ENCODE measurements at regions of chr7 and their contacts with region 1.

Region 1: GRCh38 chr7:26187380-26188205 is 13.0 kb downstream of the HNRNPA2B1 start:
- DNase-seq: no peak
- CTCF ChIP-seq: no peak

Region 2: DNA sequence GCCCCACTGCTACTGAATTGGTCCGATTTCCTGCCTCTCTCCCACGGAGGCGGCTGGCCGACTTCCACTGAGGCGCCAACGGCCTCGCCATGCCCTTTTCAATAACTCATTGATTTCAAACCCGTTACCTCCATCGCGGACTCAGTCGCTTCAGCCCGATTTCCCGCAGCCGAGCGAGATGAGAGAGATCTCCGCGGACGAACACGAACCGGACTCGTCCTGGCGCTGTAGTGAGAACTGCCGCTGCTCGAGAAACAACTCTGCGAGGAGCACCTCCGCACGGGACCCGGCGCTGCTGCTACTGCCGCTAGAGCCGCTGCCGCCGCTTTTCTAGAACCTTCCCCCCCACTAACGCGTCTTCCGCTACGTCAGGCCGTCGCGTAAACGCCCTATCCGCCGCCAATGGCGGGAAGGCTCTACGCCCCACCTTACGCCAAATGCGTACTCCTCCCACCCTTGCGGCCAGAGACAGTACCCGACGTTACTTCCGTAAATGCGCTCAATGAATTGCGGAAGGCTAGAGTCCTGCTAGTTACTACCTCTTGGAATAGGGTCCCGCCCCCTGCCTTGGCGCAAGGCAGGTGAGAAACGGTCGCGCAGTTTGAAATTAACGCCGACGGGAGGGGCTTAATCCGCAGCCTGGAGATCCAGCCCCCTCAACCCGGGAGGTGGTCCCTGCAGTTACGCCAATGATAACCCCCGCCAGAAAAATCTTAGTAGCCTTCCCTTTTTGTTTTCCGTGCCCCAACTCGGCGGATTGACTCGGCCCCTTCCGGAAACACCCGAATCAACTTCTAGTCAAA is 13.1 kb after region 1 on chr7 and contains the start of gene HNRNPA2B1:
- CTCF ChIA-PET with region 1: interaction called, 48 read pairs
- POLR2A ChIA-PET with region 1: interaction called, 41 read pairs
- DNase-seq: peak; percentile 80
- CTCF ChIP-seq: no peak

Region 3: DNA sequence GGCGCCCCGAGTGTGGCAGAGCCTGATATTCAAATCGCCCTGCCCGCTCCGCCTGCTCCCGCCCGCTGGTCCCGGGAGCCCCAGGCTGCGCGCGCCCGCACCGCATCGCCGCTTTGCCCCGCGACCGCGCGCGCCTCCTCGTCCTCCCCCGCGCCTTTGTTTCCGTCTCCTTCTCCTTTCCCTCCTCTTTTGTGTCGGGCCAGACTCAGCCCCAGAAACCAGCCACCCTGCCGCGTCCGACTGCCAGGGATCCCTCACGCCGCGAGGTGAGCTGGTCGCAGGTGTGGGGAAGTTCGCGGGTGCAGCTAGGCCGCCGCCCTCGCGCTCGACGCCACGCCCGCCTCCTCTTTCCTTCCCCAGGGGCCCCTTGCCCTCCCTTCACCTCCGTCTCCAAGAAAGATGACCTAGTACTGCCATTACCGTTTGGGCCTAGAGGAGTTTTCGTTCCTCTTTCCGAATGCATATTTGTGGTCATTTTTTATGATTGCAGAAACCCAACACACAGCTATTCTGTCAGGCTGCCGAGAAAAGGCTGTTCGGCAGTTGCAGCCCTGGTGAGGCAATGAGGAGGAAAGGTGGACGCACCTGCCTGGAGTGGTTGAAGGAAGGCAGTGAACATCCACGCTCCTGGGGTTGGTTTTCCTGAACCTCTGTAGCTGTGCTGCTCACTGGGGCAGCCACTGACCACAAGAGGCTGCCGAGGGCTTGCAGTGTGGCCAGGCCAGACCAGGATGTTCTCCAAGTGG is 211.3 kb after region 1 on chr7:
- CTCF ChIA-PET with region 1: no interaction called
- POLR2A ChIA-PET with region 1: no interaction called
- DNase-seq: peak; percentile 87
- CTCF ChIP-seq: no peak

Region 4: GRCh38 chr7:26461518-26461917 is 273.9 kb after region 1 on chr7:
- CTCF ChIA-PET with region 1: no interaction called
- POLR2A ChIA-PET with region 1: no interaction called
- DNase-seq: no peak
- CTCF ChIP-seq: no peak

Region 5: GRCh38 chr7:26620352-26620751 is 432.8 kb after region 1 on chr7:
- CTCF ChIA-PET with region 1: no interaction called
- POLR2A ChIA-PET with region 1: no interaction called
- DNase-seq: no peak
- CTCF ChIP-seq: no peak

Measured in GM10248 (cell line).